ENCODE measurements at regions of chr7 and their contacts with region 1.

Region 1: GRCh38 chr7:134954197-134955082 is 31.9 kb upstream of the AGBL3 start:
- H3K4me3 Mint-ChIP-seq: no peak overlapping the region
- H3K27ac Mint-ChIP-seq: no peak overlapping the region
- H3K4me1 Mint-ChIP-seq: no peaks in the 10 kb centered on the region
- H3K27me3 Mint-ChIP-seq: peaks cover 2% of the 10 kb centered on the region

Region 2: DNA sequence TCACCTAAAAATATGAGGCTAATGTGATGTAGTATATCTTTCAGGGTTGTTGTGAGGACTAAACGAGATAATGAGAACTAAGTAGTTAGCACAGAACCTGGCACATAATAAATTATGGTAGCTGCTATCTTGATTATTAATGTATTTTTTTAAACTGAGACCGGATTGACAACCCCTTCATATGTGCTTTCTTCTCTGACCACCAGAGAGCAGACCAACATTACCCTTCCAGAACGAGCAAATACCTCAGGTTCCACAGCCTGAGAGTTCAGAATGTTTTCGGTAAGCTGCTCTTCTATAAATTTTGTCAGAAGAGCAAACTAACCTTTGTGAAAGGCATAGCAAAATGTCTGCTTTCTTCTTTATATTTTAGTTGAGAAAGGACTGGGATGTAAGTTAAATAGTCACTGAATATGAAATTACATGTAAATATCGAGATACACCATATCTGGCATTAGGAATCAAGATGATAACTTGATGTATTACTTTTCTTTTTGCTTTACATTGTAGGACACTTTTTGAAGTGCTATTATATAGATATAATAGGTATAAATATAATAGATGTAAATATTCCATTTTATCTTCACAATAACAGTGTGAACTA is 321.4 kb before region 1 on chr7:
- intact Hi-C with region 1: loop called (anchors 5 kb)
- H3K4me3 Mint-ChIP-seq: no peak overlapping the region
- H3K27ac Mint-ChIP-seq: no peak overlapping the region
- H3K4me1 Mint-ChIP-seq: peaks cover 43% of the 10 kb centered on the region
- H3K27me3 Mint-ChIP-seq: no peaks in the 10 kb centered on the region

Region 3: DNA sequence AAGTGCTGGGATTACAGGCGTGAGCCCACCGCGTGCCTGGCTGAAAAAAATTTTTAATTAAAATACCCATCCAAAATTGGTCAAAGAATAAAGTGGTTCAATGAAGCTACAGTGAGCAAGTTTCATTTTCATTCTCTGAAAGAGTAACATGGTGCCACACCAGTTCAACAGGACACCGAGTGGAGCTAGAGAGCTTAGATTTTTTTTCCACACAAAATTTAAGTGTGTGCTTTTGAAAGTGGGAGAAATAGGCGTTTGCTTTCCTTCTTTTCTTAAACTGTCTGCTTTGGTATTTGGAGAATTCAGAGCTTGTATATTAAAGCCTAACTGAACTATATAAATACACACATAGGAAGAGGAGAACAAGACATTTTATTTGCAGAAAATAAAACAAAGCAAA is 264.4 kb before region 1 on chr7:
- intact Hi-C with region 1: loop called (anchors 2 kb)
- H3K4me3 Mint-ChIP-seq: no peak overlapping the region
- H3K27ac Mint-ChIP-seq: no peak overlapping the region
- H3K4me1 Mint-ChIP-seq: peaks cover 45% of the 10 kb centered on the region
- H3K27me3 Mint-ChIP-seq: peaks cover 15% of the 10 kb centered on the region